Activated CD4-positive, alpha-beta T cell treated with anti-CD3 and anti-CD28 coated beads for 36 hours (primary cell): ENCODE measurements at regions of chr2 and their contacts with region 1.

Region 1: DNA sequence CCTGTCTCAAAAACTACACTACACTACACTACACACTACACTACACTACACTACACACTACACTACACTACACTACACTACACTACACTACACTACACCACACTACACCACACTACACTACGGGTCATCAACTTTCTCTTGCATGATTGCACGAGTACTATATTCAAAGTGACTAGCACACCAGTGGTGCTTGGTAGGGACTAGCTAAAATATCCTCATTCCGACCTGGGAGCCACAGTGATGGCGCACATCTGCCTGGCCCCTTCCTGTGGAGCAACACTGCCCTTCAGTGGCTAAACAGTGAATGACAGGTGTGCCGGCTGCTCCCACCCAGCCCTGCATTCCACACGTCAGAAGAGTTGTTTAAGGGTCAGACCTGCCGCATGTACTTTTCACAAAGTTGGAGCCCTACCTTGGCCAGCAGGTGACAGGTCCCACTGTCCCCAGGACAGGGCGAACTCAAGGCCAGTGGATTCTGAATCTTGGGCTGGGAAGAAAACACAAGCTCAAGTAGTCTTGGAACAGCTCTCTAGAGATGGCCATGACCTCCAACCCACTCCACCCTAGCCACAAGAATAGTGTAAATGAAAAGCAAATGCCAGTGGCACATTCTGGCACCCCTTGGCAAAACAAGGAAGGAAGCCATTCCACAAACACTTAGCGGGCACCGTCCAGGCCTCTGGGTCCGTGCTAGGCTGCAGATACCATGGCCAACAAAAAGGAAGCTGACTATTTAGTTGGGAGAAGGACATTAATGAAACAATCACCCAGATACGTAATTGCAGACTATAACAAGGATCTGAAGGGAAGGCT is 79.7 kb upstream of the MSH2 start:
- DNase-seq: peak; percentile 82
- ATAC-seq: peak; percentile 98
- H3K4me3 Mint-ChIP-seq: no peak overlapping the region
- H3K27ac Mint-ChIP-seq: no peak overlapping the region
- H3K4me1 Mint-ChIP-seq: no peaks in the 10 kb centered on the region
- H3K27me3 Mint-ChIP-seq: peaks cover 2% of the 10 kb centered on the region

Region 2: GRCh38 chr2:46650556-46651001 is 672.6 kb before region 1 on chr2:
- CTCF ChIA-PET with region 1: interaction called, 3 read pairs
- POLR2A ChIA-PET with region 1: no interaction called
- intact Hi-C with region 1: loop called (anchors 5 to 10 kb)
- DNase-seq: peak; percentile 77
- ATAC-seq: peak; percentile 69
- H3K4me3 Mint-ChIP-seq: no peak overlapping the region
- H3K27ac Mint-ChIP-seq: no peak overlapping the region
- H3K4me1 Mint-ChIP-seq: no peaks in the 10 kb centered on the region
- H3K27me3 Mint-ChIP-seq: no peaks in the 10 kb centered on the region

Region 3: DNA sequence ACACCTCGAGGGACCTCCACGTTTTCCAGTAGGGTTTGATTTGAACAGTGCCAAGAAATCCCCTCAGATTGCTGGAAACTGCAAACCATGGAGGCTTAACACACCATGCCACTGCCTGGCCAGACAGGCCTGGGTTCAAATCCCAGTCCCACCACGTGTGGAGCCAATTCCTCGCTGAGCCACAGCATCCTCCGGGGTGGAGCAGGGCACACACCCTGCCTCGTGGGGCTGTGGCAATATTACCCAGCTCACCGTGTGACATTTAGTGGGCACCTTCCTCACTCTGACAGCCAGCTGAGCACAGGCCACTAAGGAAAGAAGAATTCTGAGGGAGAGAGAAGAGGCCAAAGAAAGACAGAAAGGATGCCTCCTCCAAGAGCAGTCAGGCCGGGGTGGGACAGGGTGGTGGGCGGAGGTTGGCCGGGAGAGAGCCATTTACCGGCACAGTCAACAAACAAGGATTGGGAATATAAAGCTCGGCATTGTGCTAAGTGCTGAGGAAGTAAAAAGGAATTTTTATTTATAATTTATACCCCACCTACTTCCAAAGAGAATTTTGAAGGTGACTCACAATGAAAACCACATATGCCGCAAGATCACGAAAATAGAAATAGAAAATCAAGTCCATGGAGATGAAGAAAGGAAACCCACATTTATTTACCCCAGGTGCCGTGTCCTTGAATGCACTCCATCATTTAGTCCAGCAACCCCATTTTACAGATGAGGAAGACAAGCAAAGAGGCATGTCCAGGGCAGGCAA is 519.1 kb before region 1 on chr2:
- CTCF ChIA-PET with region 1: no interaction called
- POLR2A ChIA-PET with region 1: no interaction called
- intact Hi-C with region 1: loop called in 1 of 2 experiments (anchors 10 kb)
- DNase-seq: no peak
- ATAC-seq: no peak
- H3K4me3 Mint-ChIP-seq: no peak overlapping the region
- H3K27ac Mint-ChIP-seq: no peak overlapping the region
- H3K4me1 Mint-ChIP-seq: no peaks in the 10 kb centered on the region
- H3K27me3 Mint-ChIP-seq: peaks cover 9% of the 10 kb centered on the region

Region 4: DNA sequence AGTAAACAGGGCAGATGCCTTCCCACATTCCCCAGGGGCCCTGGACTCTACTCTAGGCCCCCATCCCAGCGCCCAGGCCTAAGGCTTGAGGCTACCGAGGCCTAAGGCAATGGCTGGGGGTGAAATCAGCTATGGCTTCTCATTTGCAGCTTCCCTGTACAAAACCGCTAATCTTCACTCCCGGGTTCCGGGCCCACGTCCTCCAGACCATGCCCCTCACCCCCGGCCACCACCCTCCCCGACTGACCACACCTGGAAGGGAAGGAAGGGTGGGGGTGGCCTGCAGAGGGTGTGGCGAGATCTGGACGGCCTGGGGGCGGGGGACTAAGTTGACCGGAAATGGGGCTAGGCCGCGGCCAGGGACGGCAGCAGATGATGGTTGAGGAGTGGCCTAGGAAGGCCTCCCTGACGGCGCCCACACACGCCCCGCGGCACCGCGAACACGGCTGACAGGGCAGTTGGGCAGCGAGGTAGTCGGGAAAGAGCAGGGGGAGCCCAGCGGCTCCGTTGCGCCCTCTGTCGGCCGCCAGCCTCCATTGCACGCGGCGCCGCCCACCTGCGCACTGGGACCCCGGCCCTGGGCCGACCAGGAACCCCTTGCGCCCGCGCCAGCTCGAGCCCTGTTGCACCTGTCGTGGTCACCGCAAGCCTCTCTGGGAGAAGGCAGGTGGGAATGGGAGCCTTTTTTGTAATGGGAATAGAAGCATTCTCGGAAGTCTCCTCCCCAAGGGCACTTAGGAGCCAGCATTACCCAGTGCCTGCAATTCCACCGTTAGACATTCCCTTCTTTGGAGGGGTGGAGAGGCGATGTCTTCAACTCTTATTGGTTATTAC is 51.0 kb before region 1 on chr2:
- CTCF ChIA-PET with region 1: interaction called, 10 read pairs
- POLR2A ChIA-PET with region 1: no interaction called
- intact Hi-C with region 1: loop called in 1 of 2 experiments (anchors 2 kb)
- DNase-seq: peak; percentile 75
- ATAC-seq: peak; percentile 96
- H3K4me3 Mint-ChIP-seq: peak overlapping the region; percentile 47
- H3K27ac Mint-ChIP-seq: no peak overlapping the region
- H3K4me1 Mint-ChIP-seq: peaks cover 1% of the 10 kb centered on the region
- H3K27me3 Mint-ChIP-seq: no peaks in the 10 kb centered on the region

Region 5: DNA sequence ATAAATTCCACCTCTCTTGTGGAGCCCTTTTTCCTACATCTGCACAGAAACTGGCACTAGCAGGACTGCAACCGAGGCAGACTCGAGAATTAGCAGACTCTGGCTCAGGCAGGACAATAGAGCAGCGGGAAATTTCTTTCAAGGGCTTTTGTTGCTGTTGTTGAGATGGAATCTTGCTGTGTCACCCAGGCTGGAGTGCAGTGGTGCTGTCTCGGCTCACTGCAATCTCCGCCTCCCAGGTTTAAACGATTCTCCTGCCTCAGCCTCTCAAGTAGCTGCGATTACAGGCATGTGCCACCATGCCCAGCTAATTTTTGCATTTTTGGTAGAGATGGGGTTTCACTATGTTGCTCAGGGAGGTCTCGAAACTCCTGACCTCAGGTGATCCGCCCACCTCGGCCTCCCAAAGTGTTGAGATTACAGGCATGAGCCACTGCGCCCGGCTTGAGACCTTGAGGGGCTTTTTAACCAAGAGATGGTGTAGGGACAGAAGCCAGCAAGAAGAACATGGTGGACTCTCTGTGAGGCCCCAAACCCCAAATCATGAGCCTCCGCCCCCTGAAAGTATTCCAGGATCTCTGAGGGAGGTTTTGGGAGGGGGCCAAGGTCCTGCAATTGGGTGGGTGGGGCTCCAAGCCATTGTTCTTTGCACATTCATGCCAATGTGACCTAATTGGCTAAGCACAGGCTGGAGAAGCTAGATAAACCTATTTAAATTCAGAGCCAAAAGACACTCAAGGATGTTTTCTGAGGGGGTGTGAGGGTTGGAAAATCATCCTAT is 11.3 kb after region 1 on chr2:
- CTCF ChIA-PET with region 1: interaction called, 10 read pairs
- POLR2A ChIA-PET with region 1: no interaction called
- intact Hi-C with region 1: no loop called
- DNase-seq: no peak
- ATAC-seq: no peak
- H3K4me3 Mint-ChIP-seq: no peak overlapping the region
- H3K27ac Mint-ChIP-seq: no peak overlapping the region
- H3K4me1 Mint-ChIP-seq: no peaks in the 10 kb centered on the region
- H3K27me3 Mint-ChIP-seq: peaks cover 3% of the 10 kb centered on the region

Region 6: GRCh38 chr2:47422560-47422959 is 99.3 kb after region 1 on chr2:
- CTCF ChIA-PET with region 1: no interaction called
- POLR2A ChIA-PET with region 1: no interaction called
- intact Hi-C with region 1: no loop called
- DNase-seq: no peak
- ATAC-seq: no peak
- H3K4me3 Mint-ChIP-seq: no peak overlapping the region
- H3K27ac Mint-ChIP-seq: no peak overlapping the region
- H3K4me1 Mint-ChIP-seq: no peaks in the 10 kb centered on the region
- H3K27me3 Mint-ChIP-seq: no peaks in the 10 kb centered on the region

Region 7: GRCh38 chr2:47460766-47461165 is 137.6 kb after region 1 on chr2:
- CTCF ChIA-PET with region 1: no interaction called
- POLR2A ChIA-PET with region 1: no interaction called
- intact Hi-C with region 1: no loop called
- DNase-seq: no peak
- ATAC-seq: no peak
- H3K4me3 Mint-ChIP-seq: no peak overlapping the region
- H3K27ac Mint-ChIP-seq: no peak overlapping the region
- H3K4me1 Mint-ChIP-seq: peaks cover 6% of the 10 kb centered on the region
- H3K27me3 Mint-ChIP-seq: no peaks in the 10 kb centered on the region